ENCODE measurements at regions of chr1 and their contacts with region 1.

Region 1: DNA sequence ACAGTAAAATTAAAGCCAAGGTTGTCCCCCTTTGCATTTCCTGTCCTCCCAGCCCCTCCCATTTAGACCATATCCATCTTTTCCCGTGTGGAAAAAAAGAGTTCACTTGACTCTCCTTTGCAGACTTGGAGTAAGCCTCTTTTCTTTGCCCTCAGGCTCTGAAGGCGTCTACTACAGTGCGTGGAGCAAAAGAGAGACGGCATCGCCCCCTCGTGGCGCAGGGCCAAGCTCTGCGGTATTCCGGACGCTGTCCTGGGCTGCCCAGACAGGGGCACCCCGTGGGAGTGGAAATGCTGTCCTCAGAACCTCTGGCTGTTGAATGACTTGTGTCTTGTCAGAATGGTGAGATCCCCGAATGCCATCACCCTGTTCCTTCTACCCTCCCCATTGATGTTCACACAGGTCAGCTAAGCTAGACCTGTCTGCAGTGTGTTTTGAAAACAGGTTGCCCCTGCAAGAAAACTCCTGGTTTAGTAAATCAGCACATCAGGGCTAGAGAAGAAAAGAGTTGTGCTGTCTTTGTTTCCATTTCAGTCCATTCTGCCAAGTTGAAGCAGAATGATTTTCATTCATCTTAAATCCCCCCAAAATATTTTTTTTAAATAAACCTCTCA is 12.3 kb upstream of the GJA8 start:
- DNase-seq: peak; percentile 58
- H3K4me3 ChIP-seq: no peak overlapping the region
- H3K27ac ChIP-seq: no peak overlapping the region
- H3K4me1 ChIP-seq: no peaks in the 10 kb centered on the region
- H3K27me3 ChIP-seq: no peaks in the 10 kb centered on the region
- CTCF ChIP-seq: peak; percentile 77 to 88

Region 2: GRCh38 chr1:147494998-147495580 is 395.2 kb before region 1 on chr1:
- CTCF ChIA-PET with region 1: no interaction called
- dilution Hi-C with region 1: loop called (anchors 25 kb)
- in situ Hi-C with region 1: no loop called
- intact Hi-C with region 1: loop called (anchors 1 kb)
- DNase-seq: peak; percentile 51
- H3K4me3 ChIP-seq: no peak overlapping the region
- H3K27ac ChIP-seq: no peak overlapping the region
- H3K4me1 ChIP-seq: no peaks in the 10 kb centered on the region
- H3K27me3 ChIP-seq: peaks cover 3% of the 10 kb centered on the region
- CTCF ChIP-seq: peak; percentile 87 to 95

Region 3: GRCh38 chr1:147627435-147628110 is 262.7 kb before region 1 on chr1:
- CTCF ChIA-PET with region 1: no interaction called
- dilution Hi-C with region 1: no loop called
- in situ Hi-C with region 1: no loop called
- intact Hi-C with region 1: no loop called
- DNase-seq: peak; percentile 6
- H3K4me3 ChIP-seq: no peak overlapping the region
- H3K27ac ChIP-seq: no peak overlapping the region
- H3K4me1 ChIP-seq: no peaks in the 10 kb centered on the region
- H3K27me3 ChIP-seq: no peaks in the 10 kb centered on the region
- CTCF ChIP-seq: peak; percentile 85 to 96

Region 4: DNA sequence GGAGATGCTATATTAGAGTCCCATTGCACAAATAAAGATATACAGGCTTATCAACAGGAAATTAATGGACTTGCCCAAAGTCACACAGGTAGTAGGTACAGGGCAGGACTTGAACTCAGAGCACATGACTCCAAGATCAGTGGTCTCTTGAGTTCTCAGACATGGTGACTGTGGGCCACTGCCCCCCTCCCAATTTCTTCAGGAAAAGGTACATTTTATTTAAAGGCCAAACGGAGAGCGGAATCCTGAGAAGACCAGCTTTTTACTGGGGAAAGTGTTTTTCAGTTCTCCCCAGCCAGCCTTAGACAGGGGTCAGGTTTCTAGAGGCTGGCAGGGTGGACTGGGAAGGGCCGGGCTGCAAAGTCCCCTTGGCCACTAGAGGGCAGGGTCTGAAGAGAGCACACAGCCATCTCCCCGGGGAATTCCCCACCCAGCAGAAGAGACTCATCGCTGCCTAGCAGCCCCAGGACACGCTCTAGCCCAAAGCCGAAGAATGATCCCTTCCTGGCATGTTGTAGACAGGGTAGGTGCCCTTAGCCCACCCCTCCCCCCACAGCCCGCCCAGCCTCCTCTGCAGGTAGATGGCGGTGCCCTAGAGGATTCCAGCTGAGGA is 249.6 kb before region 1 on chr1:
- CTCF ChIA-PET with region 1: no interaction called
- dilution Hi-C with region 1: loop called (anchors 5 kb)
- in situ Hi-C with region 1: loop called in 1 of 2 experiments (anchors 5 kb)
- intact Hi-C with region 1: loop called (anchors 1 kb)
- DNase-seq: peak; percentile 78
- H3K4me3 ChIP-seq: no peak overlapping the region
- H3K27ac ChIP-seq: no peak overlapping the region
- H3K4me1 ChIP-seq: no peaks in the 10 kb centered on the region
- H3K27me3 ChIP-seq: no peaks in the 10 kb centered on the region
- CTCF ChIP-seq: peak; percentile 74 to 98

Region 5: DNA sequence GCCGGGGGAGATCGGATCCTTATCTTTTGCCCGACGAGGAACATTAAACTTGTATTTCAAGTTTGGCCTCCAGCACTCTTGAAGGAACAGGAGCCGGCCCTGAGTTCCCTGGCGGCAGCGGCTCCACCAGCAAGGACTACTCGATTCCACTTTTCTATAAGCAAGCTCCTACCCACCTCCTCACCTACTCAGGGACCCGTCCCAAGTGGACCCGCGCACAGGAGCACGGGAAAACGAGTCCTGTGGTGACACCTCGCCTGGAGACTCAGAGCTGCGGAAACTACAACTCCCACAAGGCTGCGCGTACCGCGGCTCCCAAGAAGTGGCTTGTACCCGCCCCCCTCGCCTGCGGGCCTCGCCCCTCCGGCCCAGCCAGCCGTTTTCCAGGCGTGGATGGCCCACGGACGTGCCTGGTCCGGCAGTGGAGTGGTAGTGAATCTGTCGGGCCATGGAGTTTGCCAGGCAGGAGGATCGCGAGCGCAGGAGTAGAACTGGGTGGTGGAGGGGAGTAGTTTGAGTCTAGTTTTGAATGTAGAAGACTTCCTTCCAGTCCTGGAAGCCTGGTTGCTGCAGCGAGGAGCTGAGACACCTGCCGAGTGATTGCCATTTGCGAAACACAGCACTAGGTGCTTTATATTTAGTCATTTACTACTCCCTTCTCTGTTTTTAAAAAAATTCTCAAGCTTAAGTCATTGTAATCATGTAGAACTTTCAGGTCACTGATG is 219.8 kb before region 1 on chr1 and contains the start of gene ACP6:
- CTCF ChIA-PET with region 1: no interaction called
- dilution Hi-C with region 1: no loop called
- in situ Hi-C with region 1: no loop called
- intact Hi-C with region 1: loop called (anchors 1 kb)
- DNase-seq: peak; percentile 88
- H3K4me3 ChIP-seq: peak within 1 kb of the TSS; percentile 63 to 75 (median 69)
- H3K27ac ChIP-seq: peak within 1 kb of the TSS; percentile 5
- H3K4me1 ChIP-seq: peaks cover 4% of the 10 kb centered on the region
- H3K27me3 ChIP-seq: no peaks in the 10 kb centered on the region
- CTCF ChIP-seq: no peak
- total RNA-seq, gene ACP6: 7.2 to 10.4 TPM

Region 6: GRCh38 chr1:147723691-147724323 is 166.5 kb before region 1 on chr1:
- CTCF ChIA-PET with region 1: interaction called, 6 read pairs
- dilution Hi-C with region 1: no loop called
- in situ Hi-C with region 1: loop called (anchors 5 kb)
- intact Hi-C with region 1: loop called (anchors 1 kb)
- DNase-seq: peak; percentile 15
- H3K4me3 ChIP-seq: no peak overlapping the region
- H3K27ac ChIP-seq: no peak overlapping the region
- H3K4me1 ChIP-seq: peaks cover 12% of the 10 kb centered on the region
- H3K27me3 ChIP-seq: no peaks in the 10 kb centered on the region
- CTCF ChIP-seq: peak; percentile 30 to 62

Measured in mammary epithelial cell (primary cell).